Activated CD4-positive, alpha-beta T cell treated with anti-CD3 and anti-CD28 coated beads for 36 hours (primary cell): ENCODE measurements at regions of chr7 and their contacts with region 1.

Region 1: GRCh38 chr7:122305475-122306319 is 1.1 kb upstream of the FEZF1 start:
- DNase-seq: no peak
- ATAC-seq: no peak
- H3K4me3 Mint-ChIP-seq: no peak overlapping the region
- H3K27ac Mint-ChIP-seq: no peak overlapping the region
- H3K4me1 Mint-ChIP-seq: no peaks in the 10 kb centered on the region
- H3K27me3 Mint-ChIP-seq: peaks cover 73% of the 10 kb centered on the region

Region 2: GRCh38 chr7:122290476-122290875 is 15.2 kb before region 1 on chr7:
- CTCF ChIA-PET with region 1: no interaction called
- POLR2A ChIA-PET with region 1: no interaction called
- intact Hi-C with region 1: no loop called
- DNase-seq: no peak
- ATAC-seq: no peak
- H3K4me3 Mint-ChIP-seq: no peak overlapping the region
- H3K27ac Mint-ChIP-seq: no peak overlapping the region
- H3K4me1 Mint-ChIP-seq: no peaks in the 10 kb centered on the region
- H3K27me3 Mint-ChIP-seq: peaks cover under 1% of the 10 kb centered on the region

Region 3: DNA sequence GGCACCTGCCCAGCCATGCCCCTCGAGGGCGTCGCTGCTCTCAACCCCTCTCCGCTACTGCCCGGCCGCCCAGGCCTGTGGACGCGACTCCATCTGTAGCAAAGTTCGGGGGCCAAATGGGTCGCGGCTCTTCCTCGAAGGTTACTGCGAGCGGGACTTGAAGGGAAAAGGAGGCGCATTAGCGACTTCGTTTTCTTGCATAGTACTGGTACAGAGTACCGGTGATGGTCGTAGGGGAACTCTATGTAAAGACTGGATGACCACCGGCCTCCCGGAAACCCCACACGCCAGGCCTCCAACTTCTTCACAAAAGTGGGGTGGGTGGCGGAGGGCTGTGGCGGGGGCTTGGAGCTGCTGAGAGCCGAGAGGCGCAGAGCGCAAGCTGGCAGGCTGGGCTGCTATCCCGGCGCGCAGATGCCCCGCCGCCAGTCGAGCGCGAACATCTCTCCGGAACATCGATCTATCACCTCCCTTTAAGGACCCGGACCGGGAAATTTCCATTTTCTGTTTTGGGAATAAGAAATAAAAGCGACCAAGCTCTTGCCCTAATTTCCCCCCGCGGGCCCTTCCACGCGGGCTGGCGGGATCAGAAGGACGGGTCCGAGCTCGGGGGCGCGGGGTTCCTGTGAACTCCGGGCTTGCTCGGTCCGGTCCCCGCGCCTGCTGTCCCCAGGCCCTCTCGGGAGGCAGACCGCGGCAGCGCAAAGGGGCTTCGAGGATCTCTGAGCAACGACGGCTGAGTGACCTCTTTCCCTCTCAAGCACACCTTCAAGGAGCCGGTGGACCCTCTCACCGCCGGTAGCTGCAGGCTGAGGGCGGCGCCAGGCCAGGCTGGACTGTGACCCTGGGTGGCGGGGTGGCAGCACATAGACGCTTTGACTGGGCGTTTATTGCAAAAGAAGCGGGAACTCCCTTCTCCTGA is 11.0 kb after region 1 on chr7:
- CTCF ChIA-PET with region 1: no interaction called
- POLR2A ChIA-PET with region 1: no interaction called
- intact Hi-C with region 1: loop called in 1 of 2 experiments (anchors 2 kb)
- DNase-seq: no peak
- ATAC-seq: no peak
- H3K4me3 Mint-ChIP-seq: no peak overlapping the region
- H3K27ac Mint-ChIP-seq: no peak overlapping the region
- H3K4me1 Mint-ChIP-seq: no peaks in the 10 kb centered on the region
- H3K27me3 Mint-ChIP-seq: peaks cover 54% of the 10 kb centered on the region

Region 4: DNA sequence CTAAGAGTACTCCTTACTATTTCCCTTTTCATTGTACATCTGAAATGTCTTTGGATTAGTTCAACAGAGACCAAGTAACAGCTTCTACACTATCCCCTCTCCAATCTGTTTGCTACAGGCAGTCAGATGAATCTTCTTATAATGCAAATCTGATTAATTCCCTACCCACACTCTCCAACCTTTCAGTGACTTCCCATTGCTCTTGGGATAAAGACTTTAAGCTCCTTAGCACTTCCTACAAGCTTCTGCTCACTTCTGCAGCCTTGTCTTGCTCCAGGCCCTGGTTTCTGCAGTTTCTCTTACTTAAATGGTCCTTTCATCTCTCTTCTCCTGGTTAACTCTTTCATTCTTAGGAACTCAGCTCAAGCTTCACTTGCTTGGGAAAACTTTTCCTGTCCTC is 64.1 kb after region 1 on chr7:
- CTCF ChIA-PET with region 1: no interaction called
- POLR2A ChIA-PET with region 1: no interaction called
- intact Hi-C with region 1: no loop called
- DNase-seq: no peak
- ATAC-seq: no peak
- H3K4me3 Mint-ChIP-seq: no peak overlapping the region
- H3K27ac Mint-ChIP-seq: no peak overlapping the region
- H3K4me1 Mint-ChIP-seq: no peaks in the 10 kb centered on the region
- H3K27me3 Mint-ChIP-seq: peaks cover 2% of the 10 kb centered on the region

Region 5: GRCh38 chr7:122886357-122887081 is 580.8 kb after region 1 on chr7 and contains the start of gene CADPS2:
- CTCF ChIA-PET with region 1: no interaction called
- POLR2A ChIA-PET with region 1: no interaction called
- intact Hi-C with region 1: loop called in 1 of 2 experiments (anchors 10 kb)
- DNase-seq: peak; percentile 55
- ATAC-seq: peak; percentile 66
- H3K4me3 Mint-ChIP-seq: no peak within 1 kb of the TSS
- H3K27ac Mint-ChIP-seq: no peak within 1 kb of the TSS
- H3K4me1 Mint-ChIP-seq: peaks cover 8% of the 10 kb centered on the region
- H3K27me3 Mint-ChIP-seq: peaks cover 40% of the 10 kb centered on the region
- total RNA-seq, gene CADPS2: not detected